Endothelial cell of umbilical vein (primary cell): ENCODE measurements at regions of chr2 and their contacts with region 1.

Region 1: DNA sequence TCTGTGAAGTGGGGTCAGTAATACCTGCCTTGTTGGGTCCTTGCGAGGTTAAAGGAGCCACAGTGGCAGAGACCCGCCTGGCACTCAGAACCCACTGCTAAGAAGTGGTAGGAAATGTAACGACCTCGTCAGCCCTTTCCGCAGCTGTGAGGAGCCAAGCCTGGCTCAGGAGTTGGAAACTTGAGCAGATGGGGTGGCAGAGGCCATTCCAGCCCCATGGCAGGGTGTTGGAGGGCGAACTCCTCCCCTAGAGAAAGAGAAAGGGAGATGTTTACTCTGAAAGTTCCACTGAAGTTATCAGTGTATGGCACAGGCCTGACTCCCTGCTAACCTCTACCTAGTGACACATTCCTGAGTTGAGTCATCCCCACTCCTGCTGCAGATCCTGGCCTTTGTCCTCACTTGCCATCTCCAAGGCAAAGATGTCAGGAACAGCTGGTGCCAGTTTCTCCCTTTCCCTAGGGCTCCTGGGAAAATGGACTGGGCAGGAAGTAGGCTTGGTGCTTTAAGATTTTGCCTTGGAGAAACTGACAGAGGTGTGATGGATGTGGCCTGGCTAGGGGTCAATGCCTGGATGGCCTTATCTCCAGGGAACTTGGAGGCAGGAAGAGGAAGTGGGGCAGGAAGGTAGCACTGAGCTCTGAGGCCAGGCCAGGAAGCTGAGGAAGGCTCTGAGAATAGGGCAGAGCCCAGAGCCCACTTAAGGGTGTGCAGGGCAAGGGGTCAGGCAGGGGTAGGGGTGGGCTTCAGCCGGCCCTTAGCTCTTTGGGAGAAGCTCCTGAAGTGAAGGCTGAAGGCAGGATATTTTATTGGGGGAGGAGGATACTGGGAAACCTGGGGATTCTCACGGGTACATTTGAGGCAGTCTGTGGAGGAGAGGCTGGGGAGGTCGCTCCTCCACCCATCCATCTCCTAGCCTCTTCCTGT is 889 bp downstream of the VAMP5 start:
- DNase-seq: peak; percentile 90
- H3K4me3 ChIP-seq: peak overlapping the region; percentile 17 to 58 (median 55)
- H3K27ac ChIP-seq: peak overlapping the region; percentile 66
- H3K4me1 ChIP-seq: peaks cover 56% of the 10 kb centered on the region
- H3K27me3 ChIP-seq: no peaks in the 10 kb centered on the region
- CTCF ChIP-seq: no peak
- POLR2A ChIP-seq: peak; percentile 82

Region 2: GRCh38 chr2:85368921-85369320 is 216.2 kb before region 1 on chr2:
- CTCF ChIA-PET with region 1: no interaction called
- POLR2A ChIA-PET with region 1: no interaction called
- dilution Hi-C with region 1: no loop called
- intact Hi-C with region 1: no loop called
- DNase-seq: no peak
- H3K4me3 ChIP-seq: no peak overlapping the region
- H3K27ac ChIP-seq: no peak overlapping the region
- H3K4me1 ChIP-seq: no peaks in the 10 kb centered on the region
- H3K27me3 ChIP-seq: no peaks in the 10 kb centered on the region
- CTCF ChIP-seq: no peak
- POLR2A ChIP-seq: no peak

Region 3: DNA sequence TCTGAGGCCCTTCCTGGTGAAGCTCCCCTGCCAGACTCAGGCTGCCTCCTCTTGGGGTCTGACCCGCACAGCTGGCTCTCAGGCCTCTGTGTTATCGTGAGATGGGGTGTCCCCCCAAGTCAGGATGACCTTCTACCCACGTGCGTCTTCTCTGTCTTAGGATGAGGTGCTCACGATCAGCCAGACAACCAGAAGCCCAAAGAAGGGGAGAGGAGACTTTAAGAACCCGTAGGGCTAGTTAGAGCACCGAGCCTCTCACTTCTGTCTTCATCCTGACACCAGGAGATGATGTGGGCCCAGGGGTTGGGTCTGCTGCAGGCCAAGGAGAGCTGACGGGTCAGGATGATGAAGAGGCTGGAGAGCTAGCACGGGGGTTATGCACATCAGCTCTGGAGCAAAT is 196.0 kb before region 1 on chr2:
- CTCF ChIA-PET with region 1: no interaction called
- POLR2A ChIA-PET with region 1: no interaction called
- dilution Hi-C with region 1: no loop called
- intact Hi-C with region 1: no loop called
- DNase-seq: no peak
- H3K4me3 ChIP-seq: no peak overlapping the region
- H3K27ac ChIP-seq: no peak overlapping the region
- H3K4me1 ChIP-seq: no peaks in the 10 kb centered on the region
- H3K27me3 ChIP-seq: no peaks in the 10 kb centered on the region
- CTCF ChIP-seq: no peak
- POLR2A ChIP-seq: no peak

Region 4: DNA sequence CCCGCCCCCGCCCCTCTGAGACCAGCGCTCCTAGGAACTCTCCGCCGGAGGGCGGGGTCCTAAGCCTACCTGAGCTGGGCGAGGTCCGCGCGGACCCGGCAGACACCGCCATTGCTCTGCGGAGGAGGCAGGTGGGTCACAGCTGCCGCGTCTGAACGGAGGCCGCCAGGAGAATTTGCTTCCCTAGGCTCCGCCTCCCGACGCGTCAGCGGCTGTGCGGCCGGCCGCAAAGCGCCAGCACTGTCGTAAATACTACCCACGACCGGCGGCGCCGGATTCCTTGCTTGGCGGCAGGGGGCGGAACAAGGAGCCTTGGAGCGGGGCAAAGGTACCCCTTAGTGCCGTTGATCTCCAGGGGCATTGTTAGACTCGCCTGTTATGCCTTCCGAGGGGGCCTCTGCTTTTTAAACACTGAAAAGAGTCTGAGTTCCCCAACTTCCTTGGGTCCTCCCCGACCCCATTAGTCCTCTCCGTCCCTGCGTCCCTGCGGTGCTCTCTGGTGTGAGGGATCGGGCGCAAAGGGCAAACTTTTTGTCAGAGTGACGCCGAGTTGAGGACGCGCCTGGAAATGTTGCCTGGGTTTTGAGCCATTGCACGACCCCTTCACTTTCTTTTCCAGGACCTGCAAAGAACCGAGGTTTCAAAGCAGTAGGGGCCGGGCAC is 23.7 kb before region 1 on chr2 and contains the start of gene GGCX:
- CTCF ChIA-PET with region 1: interaction called, 5 read pairs
- POLR2A ChIA-PET with region 1: no interaction called
- dilution Hi-C with region 1: no loop called
- intact Hi-C with region 1: loop called (anchors 1 kb)
- DNase-seq: peak; percentile 96
- H3K4me3 ChIP-seq: peak within 1 kb of the TSS; percentile 69 to 82 (median 72)
- H3K27ac ChIP-seq: peak within 1 kb of the TSS; percentile 44
- H3K4me1 ChIP-seq: peaks cover 9% of the 10 kb centered on the region
- H3K27me3 ChIP-seq: no peaks in the 10 kb centered on the region
- CTCF ChIP-seq: peak in 1 of 2 donors; percentile 5
- POLR2A ChIP-seq: peak; percentile 95
- total RNA-seq, gene GGCX: 44.5 and 48.0 TPM in 2 replicates

Region 5: DNA sequence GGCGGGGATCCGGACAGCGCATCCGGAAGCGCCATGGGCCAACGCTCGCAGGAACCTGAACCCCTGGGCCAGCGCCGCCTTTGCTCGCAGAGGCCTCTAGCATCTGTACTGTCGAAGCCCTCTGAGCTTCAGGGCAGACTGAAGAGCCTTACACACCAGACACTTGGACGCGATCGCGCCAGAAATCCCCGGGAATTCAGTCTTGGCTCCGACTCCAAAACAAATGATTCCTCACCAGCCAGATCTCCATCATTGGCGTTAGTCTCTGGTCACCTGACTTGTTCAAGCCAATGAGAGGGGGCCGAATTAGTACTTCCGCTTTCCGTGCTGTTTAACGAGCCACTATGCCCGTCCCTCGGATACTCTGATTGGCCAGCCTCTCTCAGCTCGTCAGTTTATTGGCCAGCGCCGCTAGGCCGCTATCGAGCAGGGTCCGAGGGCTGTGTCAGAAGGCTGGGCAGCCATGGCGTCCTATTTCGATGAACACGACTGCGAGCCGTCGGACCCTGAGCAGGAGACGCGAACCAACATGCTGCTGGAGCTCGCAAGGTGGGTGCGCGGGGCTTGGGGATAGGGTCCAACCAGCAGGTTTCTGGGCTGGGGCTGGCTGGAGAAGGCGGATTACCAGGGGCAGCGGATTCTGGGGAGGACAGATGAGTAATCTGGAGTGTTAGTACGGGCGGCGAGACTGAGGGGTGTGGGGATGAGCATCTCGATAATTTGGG is 10.3 kb after region 1 on chr2 and contains the start of gene RNF181:
- CTCF ChIA-PET with region 1: interaction called, 8 read pairs
- POLR2A ChIA-PET with region 1: interaction called, 8 read pairs
- dilution Hi-C with region 1: no loop called
- intact Hi-C with region 1: loop called (anchors 1 kb)
- DNase-seq: peak; percentile 99
- H3K4me3 ChIP-seq: peak within 1 kb of the TSS; percentile 38 to 94 (median 62)
- H3K27ac ChIP-seq: peak within 1 kb of the TSS; percentile 67
- H3K4me1 ChIP-seq: peaks cover 23% of the 10 kb centered on the region
- H3K27me3 ChIP-seq: no peaks in the 10 kb centered on the region
- CTCF ChIP-seq: no peak
- POLR2A ChIP-seq: peak; percentile 90
- total RNA-seq, gene RNF181: 133 and 142 TPM in 2 replicates

Region 6: DNA sequence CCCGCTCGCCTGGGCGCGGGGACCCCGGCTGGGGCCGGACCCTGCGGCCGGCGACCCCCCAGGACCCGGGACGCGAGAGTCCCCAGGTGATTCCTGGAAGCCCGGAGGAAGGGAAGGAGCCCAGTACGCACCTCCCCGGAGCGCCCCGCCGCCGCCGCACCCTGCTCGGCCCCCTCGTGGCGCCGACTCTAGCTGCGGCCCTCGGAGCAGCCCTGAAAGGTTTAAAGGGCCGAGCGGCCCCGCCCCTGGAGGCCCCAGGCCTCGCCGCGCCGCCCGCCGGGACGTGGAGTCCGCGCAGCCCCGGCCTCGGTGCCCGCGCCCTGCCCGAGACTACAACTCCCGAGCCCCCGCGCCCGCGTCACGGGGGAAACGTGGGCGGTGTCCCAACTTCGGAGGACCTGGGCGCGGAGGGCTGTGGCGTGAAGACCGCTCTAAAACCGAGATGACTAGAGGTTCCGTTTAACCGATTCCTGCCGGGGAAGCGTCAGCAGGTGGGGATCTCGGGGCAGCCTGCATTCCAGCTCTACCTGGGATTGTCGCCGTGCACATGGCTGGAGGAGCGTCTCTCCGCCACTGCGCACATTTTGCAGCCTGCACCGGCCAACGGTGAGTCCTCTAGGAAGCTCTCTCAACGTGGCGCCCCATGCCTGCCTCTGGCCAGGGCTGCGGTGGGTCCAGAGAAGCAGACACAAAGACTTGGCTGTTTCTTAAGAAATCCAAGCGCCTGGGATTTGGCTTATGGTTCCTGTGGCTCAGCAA is 17.5 kb after region 1 on chr2 and contains the start of gene TMEM150A:
- CTCF ChIA-PET with region 1: interaction called, 8 read pairs
- POLR2A ChIA-PET with region 1: interaction called, 5 read pairs
- dilution Hi-C with region 1: no loop called
- intact Hi-C with region 1: loop called (anchors 1 kb)
- DNase-seq: peak; percentile 88
- H3K4me3 ChIP-seq: peak within 1 kb of the TSS; percentile 64 to 98 (median 65)
- H3K27ac ChIP-seq: peak within 1 kb of the TSS; percentile 23
- H3K4me1 ChIP-seq: peaks cover 24% of the 10 kb centered on the region
- H3K27me3 ChIP-seq: no peaks in the 10 kb centered on the region
- CTCF ChIP-seq: peak; percentile 32 to 51
- POLR2A ChIP-seq: peak; percentile 87
- total RNA-seq, gene TMEM150A: 14.6 and 17.7 TPM in 2 replicates

Region 7: GRCh38 chr2:85611705-85612587 is 26.8 kb after region 1 on chr2 and contains the start of gene C2orf68:
- CTCF ChIA-PET with region 1: interaction called, 4 read pairs
- POLR2A ChIA-PET with region 1: interaction called, 7 read pairs
- dilution Hi-C with region 1: no loop called
- intact Hi-C with region 1: loop called (anchors 2 kb)
- DNase-seq: peak; percentile 79
- H3K4me3 ChIP-seq: peak within 1 kb of the TSS; percentile 77 to 98 (median 91)
- H3K27ac ChIP-seq: peak within 1 kb of the TSS; percentile 61
- H3K4me1 ChIP-seq: peaks cover 14% of the 10 kb centered on the region
- H3K27me3 ChIP-seq: no peaks in the 10 kb centered on the region
- CTCF ChIP-seq: no peak
- POLR2A ChIP-seq: peak; percentile 93
- total RNA-seq, gene C2orf68: 23.0 and 27.4 TPM in 2 replicates

Region 8: DNA sequence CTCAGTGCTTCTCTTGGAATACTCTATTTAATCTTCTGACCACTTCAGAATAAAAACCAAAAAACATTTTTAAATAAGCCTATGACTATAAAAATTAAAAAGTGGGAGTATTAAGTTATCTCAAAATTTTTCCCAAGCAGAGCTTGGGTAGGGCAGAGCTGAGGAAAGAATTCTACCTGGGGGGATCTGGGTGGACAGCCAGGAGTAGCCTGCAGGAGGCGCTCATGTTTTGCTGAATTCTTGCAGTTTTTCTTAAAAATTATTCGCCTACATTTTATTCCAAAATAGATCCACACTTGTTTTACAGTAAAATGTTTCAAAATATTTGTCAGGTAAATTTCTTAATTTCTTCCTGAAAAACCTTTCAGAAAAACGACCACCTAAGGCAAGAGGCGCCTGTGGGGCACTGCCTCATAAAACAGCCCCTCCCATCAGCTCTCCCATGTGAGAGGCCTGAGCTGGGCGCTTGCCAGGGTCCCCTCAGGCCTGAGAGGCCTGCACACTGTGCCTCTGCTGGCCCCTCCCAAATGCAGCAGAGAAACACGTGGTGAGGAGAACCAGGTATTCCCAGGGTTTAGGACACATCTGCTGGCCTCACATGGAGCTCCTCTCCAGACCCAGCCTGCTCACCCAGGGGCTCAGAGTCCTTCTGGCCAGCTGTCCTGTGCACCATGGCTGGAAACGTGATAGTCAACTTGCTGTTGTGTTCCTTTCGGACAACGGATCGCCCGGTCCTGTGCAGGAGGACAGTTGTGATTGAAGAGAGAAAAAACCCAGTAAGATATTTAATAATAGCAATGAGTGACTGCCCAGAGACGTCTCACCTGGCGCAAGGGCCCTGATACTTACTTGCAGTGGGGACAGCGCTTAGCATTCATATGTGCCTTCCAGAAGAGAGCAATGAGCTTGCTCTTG is 503.1 kb after region 1 on chr2:
- CTCF ChIA-PET with region 1: no interaction called
- POLR2A ChIA-PET with region 1: no interaction called
- dilution Hi-C with region 1: no loop called
- intact Hi-C with region 1: no loop called
- DNase-seq: no peak
- H3K4me3 ChIP-seq: no peak overlapping the region
- H3K27ac ChIP-seq: no peak overlapping the region
- H3K4me1 ChIP-seq: no peaks in the 10 kb centered on the region
- H3K27me3 ChIP-seq: no peaks in the 10 kb centered on the region
- CTCF ChIP-seq: peak; percentile 37 to 38
- POLR2A ChIP-seq: no peak